A673 (cell line): ENCODE measurements at regions of chrX and their contacts with region 1.

Region 1: DNA sequence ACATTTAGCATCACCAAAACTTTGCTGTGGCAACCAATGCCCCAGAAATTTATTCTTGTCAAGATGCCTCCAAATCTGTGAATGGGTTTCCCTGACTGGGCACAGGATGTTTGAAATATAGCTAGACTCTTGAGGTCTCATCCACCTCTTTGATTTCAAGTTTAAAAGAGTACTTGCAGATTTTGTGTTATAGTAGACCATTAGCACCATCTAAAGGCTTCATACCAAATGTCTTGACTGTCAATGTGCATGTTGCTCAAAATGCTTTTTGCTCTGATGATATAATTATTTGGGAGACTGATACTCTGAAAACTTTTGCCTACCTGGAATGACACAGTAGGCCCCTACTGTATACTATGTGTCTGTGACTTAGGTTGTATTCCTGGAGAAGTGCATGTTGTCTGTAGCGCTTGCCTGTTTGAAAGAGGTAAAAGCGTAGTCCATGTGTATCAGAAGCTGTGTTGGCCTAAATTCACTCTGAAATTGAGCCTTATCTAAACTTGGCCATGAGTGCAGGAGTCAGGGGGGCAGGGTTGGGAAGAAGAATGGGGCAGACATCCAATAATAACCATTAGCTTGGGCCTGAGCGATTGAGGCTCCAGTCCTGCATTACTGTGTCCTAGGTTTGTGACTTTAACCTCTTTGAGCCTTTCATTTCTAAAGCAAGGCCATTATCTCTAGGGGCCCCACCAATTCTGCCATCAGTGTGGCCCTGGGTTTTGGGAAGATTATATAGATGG is 33.8 kb downstream of the NDP start:
- DNase-seq: peak; percentile 16
- H3K4me3 ChIP-seq: no peak overlapping the region
- H3K27ac ChIP-seq: no peak overlapping the region
- H3K4me1 ChIP-seq: no peaks in the 10 kb centered on the region
- H3K27me3 ChIP-seq: peaks cover 4% of the 10 kb centered on the region
- CTCF ChIP-seq: peak; percentile 27; the same call in 1 of the 2 replicates

Region 2: DNA sequence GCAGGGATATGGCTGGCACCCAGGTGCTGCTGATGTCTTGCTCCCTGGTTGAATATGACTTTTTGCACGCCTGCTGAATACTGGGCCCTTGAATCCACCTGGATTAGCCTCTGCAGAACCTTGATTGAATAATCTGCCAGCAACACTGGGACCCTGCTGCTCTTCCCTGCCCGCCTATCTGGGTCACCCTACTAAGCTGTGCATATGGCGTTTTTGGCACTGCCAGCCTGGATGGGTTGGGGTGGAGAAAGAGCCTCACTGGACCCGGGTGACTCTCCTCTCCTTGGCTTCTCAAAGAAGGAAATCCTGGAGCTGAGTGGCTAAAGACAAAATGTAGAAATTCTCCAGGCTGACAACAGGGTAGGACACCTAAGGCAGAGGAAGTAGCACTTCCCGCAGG is 183.3 kb before region 1 on chrX:
- CTCF ChIA-PET with region 1: no interaction called
- POLR2A ChIA-PET with region 1: no interaction called
- intact Hi-C with region 1: no loop called
- DNase-seq: no peak
- H3K4me3 ChIP-seq: no peak overlapping the region
- H3K27ac ChIP-seq: no peak overlapping the region
- H3K4me1 ChIP-seq: no peaks in the 10 kb centered on the region
- H3K27me3 ChIP-seq: no peaks in the 10 kb centered on the region
- CTCF ChIP-seq: no peak

Region 3: GRCh38 chrX:43836435-43837184 is 102.7 kb before region 1 on chrX:
- CTCF ChIA-PET with region 1: no interaction called
- POLR2A ChIA-PET with region 1: no interaction called
- intact Hi-C with region 1: loop called (anchors 2 kb)
- DNase-seq: peak; percentile 48
- H3K4me3 ChIP-seq: no peak overlapping the region
- H3K27ac ChIP-seq: no peak overlapping the region
- H3K4me1 ChIP-seq: no peaks in the 10 kb centered on the region
- H3K27me3 ChIP-seq: no peaks in the 10 kb centered on the region
- CTCF ChIP-seq: peak; percentile 74

Region 4: GRCh38 chrX:43849173-43849572 is 90.2 kb before region 1 on chrX:
- CTCF ChIA-PET with region 1: no interaction called
- POLR2A ChIA-PET with region 1: no interaction called
- intact Hi-C with region 1: no loop called
- DNase-seq: no peak
- H3K4me3 ChIP-seq: no peak overlapping the region
- H3K27ac ChIP-seq: no peak overlapping the region
- H3K4me1 ChIP-seq: no peaks in the 10 kb centered on the region
- H3K27me3 ChIP-seq: no peaks in the 10 kb centered on the region
- CTCF ChIP-seq: no peak